Motor neuron (in vitro differentiated cells): ENCODE measurements at regions of chr6 and their contacts with region 1.

Region 1: DNA sequence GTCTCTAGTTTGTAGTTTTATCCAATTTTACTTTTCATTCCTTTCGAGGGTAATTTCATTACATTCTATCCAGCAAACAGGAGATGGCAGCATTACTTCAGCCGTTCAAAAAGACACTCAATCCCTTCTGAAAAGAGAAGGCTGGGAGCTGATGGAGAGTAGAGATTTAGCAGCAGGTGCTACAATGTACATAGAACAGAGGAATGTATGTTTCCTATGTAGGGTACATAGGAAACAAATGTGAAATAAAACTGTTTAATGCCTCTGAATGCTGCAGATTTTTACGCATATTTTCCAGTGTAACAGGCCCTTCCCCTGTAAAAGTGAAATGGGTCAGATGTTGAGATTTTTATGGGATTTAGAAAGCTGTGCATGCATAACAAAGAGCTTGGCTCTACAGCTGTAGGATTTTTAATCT is 16.0 kb downstream of the RPS12 start:
- ATAC-seq: peak; percentile 67 to 82 (median 73)
- H3K4me3 ChIP-seq: no peak overlapping the region
- H3K27ac ChIP-seq: no peak overlapping the region
- H3K4me1 ChIP-seq: peaks cover 0 to 4% of the 10 kb centered on the region in 2 donors

Region 2: GRCh38 chr6:132279592-132280139 is 550.7 kb before region 1 on chr6:
- in situ Hi-C with region 1: no loop called
- ATAC-seq: peak; percentile 61 to 84 (median 71)
- H3K4me3 ChIP-seq: peak overlapping the region; percentile 23 to 46 (median 40)
- H3K27ac ChIP-seq: no peak overlapping the region
- H3K4me1 ChIP-seq: no peaks in the 10 kb centered on the region

Region 3: GRCh38 chr6:133130863-133131262 is 300.5 kb after region 1 on chr6:
- in situ Hi-C with region 1: no loop called
- ATAC-seq: peak in 3 of 8 experiments; percentile 20 to 77 (median 40)
- H3K4me3 ChIP-seq: no peak overlapping the region
- H3K27ac ChIP-seq: no peak overlapping the region
- H3K4me1 ChIP-seq: peaks cover 20 to 22% of the 10 kb centered on the region in 2 donors

Region 4: DNA sequence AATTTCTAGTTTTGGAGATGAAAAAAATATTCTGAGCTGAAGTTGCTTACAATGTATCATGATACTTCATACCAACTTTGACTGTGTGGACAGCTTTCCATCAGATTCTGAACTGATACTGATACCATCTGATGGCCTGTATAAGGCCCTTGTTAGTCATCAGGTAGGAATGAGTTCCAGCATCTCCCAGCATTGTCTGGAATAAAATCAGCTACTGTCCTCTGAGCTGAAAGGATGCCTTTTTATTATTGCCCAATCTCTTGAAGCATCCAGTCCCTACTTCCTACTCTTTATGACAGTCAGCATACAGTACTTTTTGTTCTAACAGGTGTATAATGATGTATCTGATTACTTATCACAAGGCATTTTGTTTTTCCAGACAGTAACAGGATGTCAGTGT is 340.3 kb after region 1 on chr6:
- in situ Hi-C with region 1: loop called in 1 of 9 experiments (anchors 25 kb)
- ATAC-seq: peak in 1 of 8 experiments; percentile 40
- H3K4me3 ChIP-seq: no peak overlapping the region
- H3K27ac ChIP-seq: no peak overlapping the region
- H3K4me1 ChIP-seq: peaks cover 0 to 2% of the 10 kb centered on the region in 2 donors

Region 5: GRCh38 chr6:133548414-133549159 is 718.2 kb after region 1 on chr6:
- in situ Hi-C with region 1: loop called in 7 of 9 experiments (anchors 10 to 25 kb)
- ATAC-seq: peak in 7 of 8 experiments; percentile 40 to 98 (median 67)
- H3K4me3 ChIP-seq: no peak overlapping the region
- H3K27ac ChIP-seq: no peak overlapping the region
- H3K4me1 ChIP-seq: peaks cover 12 to 15% of the 10 kb centered on the region in 2 donors

Region 6: DNA sequence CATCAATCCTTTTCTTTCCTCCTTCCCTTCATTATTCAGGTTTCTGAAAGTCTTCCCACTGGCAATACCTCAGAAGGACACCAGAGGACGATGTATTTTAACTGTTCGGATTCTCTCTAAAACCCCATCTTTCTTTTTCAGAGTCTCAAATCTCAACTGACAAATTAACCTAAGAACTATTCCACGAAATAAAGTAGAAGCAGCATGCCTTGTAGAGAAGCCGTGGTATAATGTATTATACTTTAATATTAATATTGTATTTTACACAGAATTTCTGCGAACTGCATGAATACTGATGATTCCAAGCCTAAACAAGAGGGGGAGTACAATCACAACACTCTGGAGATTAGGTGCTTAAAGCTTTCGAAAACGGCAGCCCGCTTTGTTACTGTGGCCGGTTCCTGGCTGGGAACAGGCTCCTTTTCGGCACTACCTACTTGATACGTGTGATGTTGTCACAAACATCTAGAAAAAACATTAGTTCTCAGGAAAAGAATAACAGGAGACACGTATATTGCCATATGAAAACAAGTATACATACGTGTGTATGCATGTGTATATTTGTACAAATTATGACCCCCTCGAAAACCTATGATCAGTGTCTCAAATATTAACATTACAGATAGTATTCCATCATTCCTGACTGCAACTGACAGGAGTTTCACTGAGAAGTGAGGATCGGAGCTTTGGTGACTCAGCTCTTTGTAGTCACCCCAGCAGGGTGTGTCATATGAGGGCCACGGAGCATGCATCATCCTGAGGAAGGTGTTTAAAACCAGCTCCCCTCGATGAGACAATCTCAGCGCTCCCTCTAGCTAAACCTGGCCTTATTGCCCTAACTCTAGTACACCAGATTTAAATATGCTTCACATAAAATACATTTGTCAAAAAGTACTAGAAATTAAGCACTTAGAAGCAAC is 738.9 kb after region 1 on chr6:
- in situ Hi-C with region 1: loop called in 1 of 9 experiments (anchors 25 kb)
- ATAC-seq: peak; percentile 92 to 99 (median 98)
- H3K4me3 ChIP-seq: peak overlapping the region; percentile 27 to 41 (median 33)
- H3K27ac ChIP-seq: no peak overlapping the region
- H3K4me1 ChIP-seq: peaks cover 0 to 2% of the 10 kb centered on the region in 2 donors

Region 7: GRCh38 chr6:134097114-134097707 is 1266.9 kb after region 1 on chr6:
- in situ Hi-C with region 1: loop called in 1 of 9 experiments (anchors 25 kb)
- ATAC-seq: peak in 7 of 8 experiments; percentile 36 to 72 (median 53)
- H3K4me3 ChIP-seq: no peak overlapping the region
- H3K27ac ChIP-seq: no peak overlapping the region
- H3K4me1 ChIP-seq: peaks cover 0 to 4% of the 10 kb centered on the region in 2 donors